ENCODE measurements at regions of chr4 and their contacts with region 1.

Region 1: DNA sequence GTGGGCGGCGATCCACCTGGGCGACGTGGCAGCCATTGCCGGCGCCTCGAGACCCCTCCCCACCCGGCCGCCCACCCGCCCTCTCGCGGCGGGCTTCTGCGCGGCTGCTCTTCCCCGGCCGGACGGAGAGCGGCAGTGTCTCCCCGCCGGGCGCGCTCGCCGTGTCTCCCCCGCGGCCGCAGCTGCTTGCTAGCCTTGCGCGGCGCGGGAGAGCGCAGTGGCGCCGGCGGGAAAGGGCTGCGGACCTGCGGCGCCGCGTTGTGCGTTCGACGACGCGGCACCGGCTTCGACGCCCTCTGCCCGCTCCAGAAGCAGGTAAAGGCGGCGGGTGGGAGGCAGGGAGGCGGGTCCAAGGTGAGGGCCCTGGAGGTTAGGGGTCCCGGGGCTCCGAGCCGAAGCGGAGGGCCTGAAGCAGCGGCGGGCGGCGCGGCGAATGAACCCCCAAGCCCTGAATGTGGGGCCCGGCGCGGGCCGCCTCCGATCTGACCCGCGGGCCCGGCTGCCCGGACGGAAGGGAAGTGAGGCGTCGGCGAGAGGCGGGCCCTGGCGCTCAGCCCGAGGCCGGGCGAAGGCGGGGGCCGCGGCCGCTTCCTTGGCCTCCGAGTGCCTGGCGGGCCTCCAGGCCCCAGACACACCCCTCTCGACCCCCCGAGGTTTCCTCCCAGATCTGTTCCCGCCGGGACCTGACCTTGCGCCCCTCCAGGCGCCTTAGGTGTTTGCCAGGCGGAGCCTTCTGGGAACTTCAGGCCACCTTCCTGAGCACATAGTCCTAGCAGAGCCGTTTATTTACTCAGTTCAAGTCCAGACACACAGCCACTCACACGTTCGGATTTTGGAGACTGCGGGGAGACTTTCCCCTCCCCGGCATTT is at the start of gene N4BP2:
- DNase-seq: peak; percentile 75
- ATAC-seq: peak; percentile 68
- H3K4me3 Mint-ChIP-seq: peak within 1 kb of the TSS; percentile 95
- H3K27ac Mint-ChIP-seq: peak within 1 kb of the TSS; percentile 92
- H3K4me1 Mint-ChIP-seq: peaks cover 27% of the 10 kb centered on the region
- H3K27me3 Mint-ChIP-seq: no peaks in the 10 kb centered on the region
- CTCF ChIP-seq: no peak
- total RNA-seq, gene N4BP2: 6.0 and 6.2 TPM in 2 replicates

Region 2: GRCh38 chr4:39621582-39621981 is 435.4 kb before region 1 on chr4:
- CTCF ChIA-PET with region 1: no interaction called
- POLR2A ChIA-PET with region 1: no interaction called
- intact Hi-C with region 1: loop called (anchors 5 kb)
- DNase-seq: no peak
- ATAC-seq: no peak
- H3K4me3 Mint-ChIP-seq: peak overlapping the region; percentile 9
- H3K27ac Mint-ChIP-seq: no peak overlapping the region
- H3K4me1 Mint-ChIP-seq: peaks cover 69% of the 10 kb centered on the region
- H3K27me3 Mint-ChIP-seq: no peaks in the 10 kb centered on the region
- CTCF ChIP-seq: no peak

Region 3: GRCh38 chr4:39770471-39770870 is 286.5 kb before region 1 on chr4:
- CTCF ChIA-PET with region 1: no interaction called
- POLR2A ChIA-PET with region 1: no interaction called
- intact Hi-C with region 1: no loop called
- DNase-seq: no peak
- ATAC-seq: no peak
- H3K4me3 Mint-ChIP-seq: no peak overlapping the region
- H3K27ac Mint-ChIP-seq: no peak overlapping the region
- H3K4me1 Mint-ChIP-seq: peaks cover 5% of the 10 kb centered on the region
- H3K27me3 Mint-ChIP-seq: no peaks in the 10 kb centered on the region
- CTCF ChIP-seq: no peak

Region 4: DNA sequence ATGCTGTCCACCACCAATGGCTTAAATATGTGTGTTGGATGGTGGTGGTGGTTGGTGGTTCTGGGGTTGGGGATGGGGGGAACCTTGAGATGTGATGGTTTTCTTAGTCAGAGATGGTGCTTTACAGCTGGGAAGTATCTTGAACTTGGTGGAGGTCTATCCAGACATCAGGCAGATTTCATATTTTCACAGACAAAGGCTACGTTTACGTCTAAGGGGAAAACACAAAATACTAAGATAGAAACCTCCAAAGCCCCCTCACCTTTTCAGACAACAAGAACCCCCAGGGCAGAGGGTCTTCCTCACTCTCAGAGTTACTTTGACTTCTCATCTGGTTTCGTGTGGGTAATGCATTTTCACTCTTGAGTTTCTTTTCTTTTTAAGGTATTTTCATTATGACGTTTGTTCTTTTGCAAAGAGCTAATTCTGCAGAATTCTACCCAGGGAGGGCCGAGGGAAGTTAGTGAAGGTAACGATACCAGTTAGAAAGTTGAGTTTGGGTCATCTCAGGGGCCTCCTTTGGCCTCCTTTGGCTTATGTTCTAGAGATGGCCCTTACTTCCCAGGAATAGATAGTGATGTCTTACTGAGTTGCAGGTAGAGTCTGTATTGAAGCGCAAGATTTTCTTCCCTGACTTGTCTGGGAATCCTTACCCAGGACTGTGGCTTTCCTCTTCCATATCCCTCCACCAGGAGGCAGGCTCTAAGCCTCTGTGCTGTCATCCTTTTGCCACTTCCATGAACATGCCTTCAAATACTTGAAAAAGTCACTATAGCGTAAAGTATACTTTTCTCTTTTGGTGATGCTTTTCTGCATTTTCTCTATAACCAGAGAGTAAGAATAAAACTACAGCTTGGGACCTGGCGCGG is 171.8 kb after region 1 on chr4:
- CTCF ChIA-PET with region 1: no interaction called
- POLR2A ChIA-PET with region 1: interaction called, 3 read pairs
- intact Hi-C with region 1: loop called (anchors 5 kb)
- DNase-seq: no peak
- ATAC-seq: peak; percentile 9
- H3K4me3 Mint-ChIP-seq: peak overlapping the region; percentile 25
- H3K27ac Mint-ChIP-seq: peak overlapping the region; percentile 78
- H3K4me1 Mint-ChIP-seq: peaks cover 91% of the 10 kb centered on the region
- H3K27me3 Mint-ChIP-seq: no peaks in the 10 kb centered on the region
- CTCF ChIP-seq: no peak

Region 5: DNA sequence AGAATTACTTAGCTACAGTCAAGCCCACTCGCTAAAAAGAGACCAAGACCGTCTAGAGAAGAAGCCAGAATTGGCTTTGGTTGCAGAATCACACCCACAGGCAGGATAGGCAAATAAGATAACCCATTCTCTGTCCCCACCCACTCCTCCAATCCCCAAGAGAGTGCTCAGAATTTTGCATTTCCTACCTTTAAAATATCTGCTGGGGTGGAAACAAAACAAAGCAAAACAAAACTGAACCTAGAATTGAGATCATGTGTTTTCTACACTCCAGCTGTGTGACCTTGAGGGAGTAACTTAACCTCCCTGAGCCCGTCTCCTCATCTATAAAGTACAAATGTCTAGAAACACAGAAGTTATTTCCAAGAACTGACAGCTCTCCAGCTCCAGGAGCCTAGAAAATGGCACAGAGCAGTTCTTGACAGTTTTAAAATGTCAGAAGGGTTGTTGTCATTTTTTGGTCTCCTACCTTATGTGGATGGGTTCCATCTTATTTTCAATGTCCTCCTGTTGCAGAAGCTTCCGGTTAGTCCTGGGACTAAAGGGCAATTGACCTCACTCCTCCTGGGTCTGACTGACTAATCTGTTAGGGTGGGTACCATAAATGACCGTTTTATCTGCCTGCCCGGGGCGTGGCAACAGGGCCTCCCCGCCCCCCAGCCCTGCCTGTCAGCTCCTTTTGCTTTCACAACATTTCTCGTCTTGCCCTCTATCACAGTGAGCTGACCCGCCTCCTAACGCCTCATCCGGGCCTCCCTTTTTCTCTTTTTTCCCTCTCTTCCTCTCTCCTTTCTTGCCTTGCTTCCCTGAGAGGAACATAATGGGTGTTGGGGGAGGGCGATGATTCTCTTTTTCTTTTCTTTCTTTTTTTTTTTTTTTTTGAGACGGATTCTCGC is 458.7 kb after region 1 on chr4:
- CTCF ChIA-PET with region 1: no interaction called
- POLR2A ChIA-PET with region 1: interaction called, 4 read pairs
- intact Hi-C with region 1: loop called (anchors 5 kb)
- DNase-seq: no peak
- ATAC-seq: peak; percentile 79
- H3K4me3 Mint-ChIP-seq: peak overlapping the region; percentile 67
- H3K27ac Mint-ChIP-seq: peak overlapping the region; percentile 48
- H3K4me1 Mint-ChIP-seq: peaks cover 44% of the 10 kb centered on the region
- H3K27me3 Mint-ChIP-seq: no peaks in the 10 kb centered on the region
- CTCF ChIP-seq: no peak

Region 6: GRCh38 chr4:40719008-40719623 is 662.2 kb after region 1 on chr4:
- CTCF ChIA-PET with region 1: no interaction called
- POLR2A ChIA-PET with region 1: no interaction called
- intact Hi-C with region 1: loop called (anchors 2 kb)
- DNase-seq: no peak
- ATAC-seq: no peak
- H3K4me3 Mint-ChIP-seq: no peak overlapping the region
- H3K27ac Mint-ChIP-seq: no peak overlapping the region
- H3K4me1 Mint-ChIP-seq: peaks cover 3% of the 10 kb centered on the region
- H3K27me3 Mint-ChIP-seq: no peaks in the 10 kb centered on the region
- CTCF ChIP-seq: no peak